ENCODE measurements at regions of chr12 and their contacts with region 1.

Region 1: GRCh38 chr12:110245369-110245772 is 35.7 kb upstream of the ATP2A2 start:
- DNase-seq: peak; percentile 64
- ATAC-seq: peak; percentile 80
- H3K4me3 Mint-ChIP-seq: no peak overlapping the region
- H3K27ac Mint-ChIP-seq: no peak overlapping the region
- H3K4me1 Mint-ChIP-seq: no peaks in the 10 kb centered on the region
- H3K27me3 Mint-ChIP-seq: no peaks in the 10 kb centered on the region

Region 2: GRCh38 chr12:110100315-110100970 is 144.9 kb before region 1 on chr12:
- CTCF ChIA-PET with region 1: interaction called, 13 read pairs
- DNase-seq: peak; percentile 74
- ATAC-seq: peak; percentile 80
- H3K4me3 Mint-ChIP-seq: no peak overlapping the region
- H3K27ac Mint-ChIP-seq: peak overlapping the region; percentile 81
- H3K4me1 Mint-ChIP-seq: peaks cover 11% of the 10 kb centered on the region
- H3K27me3 Mint-ChIP-seq: no peaks in the 10 kb centered on the region

Region 3: DNA sequence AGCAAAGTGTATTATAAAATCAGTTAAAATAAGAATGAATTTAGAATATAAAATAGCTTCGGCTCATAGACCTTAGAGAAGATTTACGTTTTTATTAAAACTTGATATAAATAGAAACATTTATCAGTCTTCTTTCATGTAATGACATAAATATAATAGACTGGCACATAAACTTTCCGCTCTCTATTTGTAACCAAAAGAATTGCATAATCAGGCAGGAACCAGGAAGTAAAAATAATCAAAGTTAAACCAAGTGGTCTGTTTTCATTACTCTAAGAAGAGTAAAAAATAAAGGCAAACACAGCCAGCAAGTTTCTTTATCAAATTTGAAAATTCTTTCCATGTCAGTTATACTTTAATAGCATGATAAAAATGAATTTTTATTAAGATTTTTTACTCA is 10.6 kb before region 1 on chr12:
- CTCF ChIA-PET with region 1: no interaction called
- DNase-seq: no peak
- ATAC-seq: no peak
- H3K4me3 Mint-ChIP-seq: no peak overlapping the region
- H3K27ac Mint-ChIP-seq: no peak overlapping the region
- H3K4me1 Mint-ChIP-seq: no peaks in the 10 kb centered on the region
- H3K27me3 Mint-ChIP-seq: peaks cover 25% of the 10 kb centered on the region

Region 4: DNA sequence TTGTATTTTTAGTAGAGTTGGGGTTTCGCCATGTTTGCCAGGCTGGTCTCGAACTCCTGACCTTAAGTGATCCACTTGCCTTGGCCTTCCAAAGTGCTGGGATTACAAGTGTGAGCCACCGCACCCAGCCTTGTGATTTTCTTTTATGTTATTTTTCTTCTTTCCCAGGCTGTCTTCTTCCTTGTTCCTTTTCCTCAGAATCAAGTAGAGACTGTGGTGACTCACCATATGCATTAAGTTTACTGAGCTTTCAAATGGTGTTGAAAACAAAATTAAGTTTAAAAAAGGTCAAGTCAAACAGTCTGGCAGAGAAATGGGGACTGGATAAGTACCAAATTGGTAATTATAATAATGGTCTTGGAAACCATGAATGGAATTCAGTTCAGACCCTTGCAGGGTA is 199.1 kb after region 1 on chr12:
- CTCF ChIA-PET with region 1: no interaction called
- DNase-seq: no peak
- ATAC-seq: no peak
- H3K4me3 Mint-ChIP-seq: no peak overlapping the region
- H3K27ac Mint-ChIP-seq: no peak overlapping the region
- H3K4me1 Mint-ChIP-seq: peaks cover 31% of the 10 kb centered on the region
- H3K27me3 Mint-ChIP-seq: no peaks in the 10 kb centered on the region

Measured in activated CD8-positive, alpha-beta memory T cell treated with anti-CD3 and anti-CD28 coated beads, Interleukin-2, amount 10 ng/mL, durations not matched to agents 7 days and 5 days (primary cell).